ENCODE measurements at regions of chr11 and their contacts with region 1.

Region 1: DNA sequence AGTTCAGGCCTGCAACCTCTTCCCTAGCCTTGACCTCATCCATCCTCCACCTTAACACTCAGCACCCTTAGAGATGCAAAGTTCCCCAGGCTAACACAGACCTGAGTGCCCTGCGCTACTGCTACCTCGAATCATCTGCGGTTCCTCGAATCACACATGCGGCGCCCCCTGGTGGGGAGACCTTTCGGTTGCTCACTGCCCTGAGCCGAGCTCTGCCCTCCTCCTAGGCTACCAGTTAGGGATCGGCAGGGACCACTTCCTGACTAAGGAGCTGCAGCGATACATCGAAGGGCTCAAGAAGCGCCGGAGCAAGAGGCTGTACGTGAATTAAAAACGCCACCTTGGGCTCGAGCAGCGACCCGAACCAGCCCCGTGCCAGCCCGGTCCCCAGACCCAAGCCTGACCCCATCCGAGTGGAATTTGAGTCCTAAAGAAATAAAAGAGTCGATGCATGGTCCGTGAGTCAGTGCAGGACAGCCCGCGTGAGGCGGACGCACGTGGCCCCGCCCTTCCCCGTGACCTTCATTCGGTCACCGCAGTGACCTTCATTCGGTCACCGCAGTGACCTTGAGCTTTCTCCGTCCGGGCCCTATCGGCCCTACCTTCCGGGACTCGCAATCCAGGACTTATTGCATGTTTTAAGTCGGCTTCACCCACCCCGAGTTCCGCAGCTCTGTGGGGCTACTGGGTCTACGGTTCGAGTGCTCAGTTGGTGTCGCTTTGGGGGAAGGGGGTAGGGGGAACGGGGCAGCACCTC is 830 bp upstream of the ESRRA start:
- DNase-seq: peak; percentile 93 to 98 (median 97)
- ATAC-seq: peak; percentile 55 to 56
- H3K4me3 ChIP-seq: peak overlapping the region; percentile 43
- H3K27ac ChIP-seq: peak overlapping the region; percentile 83
- H3K4me1 ChIP-seq: peaks cover 10% of the 10 kb centered on the region
- H3K27me3 ChIP-seq: no peaks in the 10 kb centered on the region

Region 2: GRCh38 chr11:64185816-64186498 is 118.5 kb before region 1 on chr11 and contains the start of gene STIP1:
- intact Hi-C with region 1: loop called in 1 of 4 experiments (anchors 5 kb)
- DNase-seq: peak; percentile 99
- ATAC-seq: peak; percentile 94 to 95
- H3K4me3 ChIP-seq: peak within 1 kb of the TSS; percentile 54
- H3K27ac ChIP-seq: peak within 1 kb of the TSS; percentile 89
- H3K4me1 ChIP-seq: peaks cover 6% of the 10 kb centered on the region
- H3K27me3 ChIP-seq: no peaks in the 10 kb centered on the region
- total RNA-seq, gene STIP1: 93.0 to 170 (median 122) TPM

Region 3: GRCh38 chr11:64204464-64204989 is 100.0 kb before region 1 on chr11:
- intact Hi-C with region 1: loop called in 2 of 4 experiments (anchors 2 to 5 kb)
- DNase-seq: peak; percentile 88 to 94 (median 92)
- ATAC-seq: peak; percentile 49 to 51
- H3K4me3 ChIP-seq: no peak overlapping the region
- H3K27ac ChIP-seq: no peak overlapping the region
- H3K4me1 ChIP-seq: no peaks in the 10 kb centered on the region
- H3K27me3 ChIP-seq: no peaks in the 10 kb centered on the region

Region 4: DNA sequence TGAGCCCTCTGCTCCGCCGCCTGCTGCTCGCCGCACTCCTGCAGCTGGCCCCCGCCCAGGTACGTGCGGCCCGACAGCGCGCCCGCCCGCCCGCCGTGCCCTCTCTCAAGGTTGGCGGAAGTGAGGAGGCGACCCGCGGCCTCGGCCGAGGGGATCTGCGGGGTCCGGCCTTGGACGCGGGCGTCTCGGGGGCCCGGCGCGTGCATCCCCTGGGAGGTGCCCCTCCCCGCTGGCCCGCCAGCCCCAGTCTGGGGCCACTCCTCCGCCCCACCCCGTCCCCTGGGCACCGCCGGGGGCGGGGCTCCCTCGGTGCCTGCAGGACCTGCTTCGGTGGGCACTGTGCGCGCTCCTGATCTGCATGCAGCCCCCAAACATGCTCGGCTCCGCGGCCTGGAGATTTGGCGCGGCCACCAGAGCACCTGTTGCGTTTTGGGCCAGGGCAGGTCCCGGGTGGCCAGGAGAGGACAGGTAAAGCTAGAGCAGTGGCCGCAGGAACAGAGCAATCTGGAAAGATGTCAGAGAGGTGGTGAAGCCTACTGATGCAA is 69.6 kb before region 1 on chr11:
- intact Hi-C with region 1: loop called in 1 of 4 experiments (anchors 5 kb)
- DNase-seq: peak; percentile 68 to 88 (median 85)
- ATAC-seq: peak; percentile 32 to 38
- H3K4me3 ChIP-seq: peak overlapping the region; percentile 94
- H3K27ac ChIP-seq: peak overlapping the region; percentile 80
- H3K4me1 ChIP-seq: no peaks in the 10 kb centered on the region
- H3K27me3 ChIP-seq: no peaks in the 10 kb centered on the region

Region 5: GRCh38 chr11:64269380-64270234 is 34.9 kb before region 1 on chr11:
- intact Hi-C with region 1: no loop called
- DNase-seq: peak; percentile 97 to 99 (median 99)
- ATAC-seq: peak; percentile 87 to 92
- H3K4me3 ChIP-seq: peak overlapping the region; percentile 69
- H3K27ac ChIP-seq: peak overlapping the region; percentile 99
- H3K4me1 ChIP-seq: no peaks in the 10 kb centered on the region
- H3K27me3 ChIP-seq: no peaks in the 10 kb centered on the region

Region 6: GRCh38 chr11:64713031-64713780 is 408.7 kb after region 1 on chr11:
- intact Hi-C with region 1: no loop called
- DNase-seq: peak; percentile 40 to 77 (median 76)
- ATAC-seq: peak in 1 of 2 donors; percentile 29
- H3K4me3 ChIP-seq: peak overlapping the region; percentile 14
- H3K27ac ChIP-seq: no peak overlapping the region
- H3K4me1 ChIP-seq: peaks cover 3% of the 10 kb centered on the region
- H3K27me3 ChIP-seq: no peaks in the 10 kb centered on the region

Region 7: GRCh38 chr11:64778508-64779346 is 474.2 kb after region 1 on chr11 and contains the start of gene SF1:
- intact Hi-C with region 1: no loop called
- DNase-seq: peak; percentile 99
- ATAC-seq: peak; percentile 96 to 97
- H3K4me3 ChIP-seq: peak within 1 kb of the TSS; percentile 98
- H3K27ac ChIP-seq: peak within 1 kb of the TSS; percentile 99
- H3K4me1 ChIP-seq: peaks cover 3% of the 10 kb centered on the region
- H3K27me3 ChIP-seq: no peaks in the 10 kb centered on the region
- total RNA-seq, gene SF1: 188 to 203 (median 197) TPM

Measured in right cardiac atrium (tissue), 5 donors.